HepG2 (cell line): ENCODE measurements at regions of chr1 and their contacts with region 1.

Region 1: GRCh38 chr1:153977250-153978240 is at the start of gene JTB:
- DNase-seq: peak; percentile 83
- ATAC-seq: peak; percentile 94
- H3K4me3 ChIP-seq: peak within 1 kb of the TSS; percentile 72 to 79 (median 77)
- H3K27ac ChIP-seq: peak within 1 kb of the TSS; percentile 88
- H3K4me1 ChIP-seq: peaks cover 25% of the 10 kb centered on the region
- H3K27me3 ChIP-seq: no peaks in the 10 kb centered on the region
- CTCF ChIP-seq: no peak; the same call in 1 of the 2 replicates
- EP300 ChIP-seq: no peak
- POLR2A ChIP-seq: peak; percentile 86 to 88
- RAD21 ChIP-seq: 0 out of 2 replicates have a peak, but pooled peaks have one; percentile 30
- total RNA-seq, gene JTB: 66.8 and 99.2 TPM in 2 replicates

Region 2: GRCh38 chr1:153958111-153958960 is 19.2 kb before region 1 on chr1 and contains the start of gene CRTC2:
- CTCF ChIA-PET with region 1: no interaction called
- POLR2A ChIA-PET with region 1: interaction called, 209 read pairs
- in situ Hi-C with region 1: no loop called
- intact Hi-C with region 1: no loop called
- DNase-seq: peak; percentile 96
- ATAC-seq: peak; percentile 81
- H3K4me3 ChIP-seq: peak within 1 kb of the TSS; percentile 89 to 99 (median 92)
- H3K27ac ChIP-seq: peak within 1 kb of the TSS; percentile 75
- H3K4me1 ChIP-seq: peaks cover 67% of the 10 kb centered on the region
- H3K27me3 ChIP-seq: peaks cover 0 to 7% of the 10 kb centered on the region in 2 experiments; a peak in 1 of 5 replicates
- CTCF ChIP-seq: peak; percentile 40; the same call in 1 of the 2 replicates
- EP300 ChIP-seq: no peak; a peak in 1 of 4 replicates
- POLR2A ChIP-seq: peak in 1 of 2 experiments; percentile 71; a peak in 3 of 4 replicates
- RAD21 ChIP-seq: 0 out of 2 replicates have a peak, but pooled peaks have one; percentile 27
- total RNA-seq, gene CRTC2: 4.0 and 6.1 TPM in 2 replicates